WTC11 (cell line): ENCODE measurements at regions of chr3 and their contacts with region 1.

Region 1: DNA sequence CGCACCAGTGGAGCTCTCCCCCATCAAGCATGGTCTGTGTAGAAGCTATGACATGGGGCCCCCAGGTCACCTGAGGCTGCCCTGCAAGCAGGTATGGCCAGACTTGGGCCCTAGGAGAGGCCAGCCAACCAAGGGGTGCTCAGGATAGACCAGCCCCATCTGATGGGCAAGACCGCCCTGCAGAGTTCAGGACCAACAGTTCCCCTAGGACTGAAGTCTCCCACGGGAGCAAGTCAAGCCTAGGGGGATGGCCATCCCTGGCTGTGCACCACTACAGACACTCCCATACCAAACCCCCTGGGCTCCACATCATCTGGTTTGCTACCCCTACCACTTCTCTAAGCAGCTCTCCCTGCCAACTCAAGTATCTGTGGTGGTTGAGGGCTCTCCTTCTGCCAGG is 142.2 kb upstream of the MANF start:
- DNase-seq: no peak
- ATAC-seq: no peak
- H3K4me3 Mint-ChIP-seq: no peak overlapping the region
- H3K27ac Mint-ChIP-seq: no peak overlapping the region
- H3K4me1 Mint-ChIP-seq: no peaks in the 10 kb centered on the region
- H3K27me3 Mint-ChIP-seq: no peaks in the 10 kb centered on the region
- CTCF ChIP-seq: no peak

Region 2: DNA sequence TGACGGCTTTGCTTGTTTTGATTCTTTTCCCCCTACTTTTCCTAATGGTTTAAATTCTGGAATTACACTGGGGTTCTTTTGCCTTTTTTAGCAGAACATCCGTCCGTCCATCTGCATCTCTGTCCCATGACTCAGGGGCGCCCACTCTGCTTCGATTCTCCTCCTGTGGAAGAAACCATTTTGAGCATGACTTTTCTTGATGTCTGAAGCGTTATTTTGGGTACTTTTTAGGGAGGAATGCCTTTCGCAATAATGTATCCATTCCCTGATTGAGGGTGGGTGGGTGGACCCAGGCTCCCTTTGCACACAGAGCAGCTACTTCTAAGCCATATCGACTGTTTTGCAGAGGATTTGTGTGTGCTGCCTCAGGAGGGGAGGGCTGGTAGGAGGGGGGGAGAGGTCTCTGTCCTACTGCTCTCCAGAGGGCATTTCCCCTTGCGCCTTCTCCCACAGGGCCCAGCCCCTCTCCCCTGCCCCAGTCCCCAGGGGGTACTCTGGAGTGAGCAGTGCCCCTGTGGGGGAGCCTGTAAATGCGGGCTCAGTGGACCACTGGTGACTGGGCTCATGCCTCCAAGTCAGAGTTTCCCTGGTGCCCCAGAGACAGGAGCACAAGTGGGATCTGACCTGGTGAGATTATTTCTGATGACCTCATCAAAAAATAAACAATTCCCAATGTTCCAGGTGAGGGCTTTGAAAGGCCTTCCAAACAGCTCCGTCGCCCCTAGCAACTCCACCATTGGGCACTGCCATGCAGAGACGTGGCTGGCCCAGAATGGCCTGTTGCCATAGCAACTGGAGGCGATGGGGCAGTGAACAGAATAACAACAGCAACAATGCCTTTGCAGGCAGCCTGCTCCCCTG is 1708.1 kb before region 1 on chr3:
- CTCF ChIA-PET with region 1: no interaction called
- POLR2A ChIA-PET with region 1: interaction called, 10 read pairs
- DNase-seq: peak; percentile 73
- ATAC-seq: peak; percentile 9
- H3K4me3 Mint-ChIP-seq: no peak overlapping the region
- H3K27ac Mint-ChIP-seq: peak overlapping the region; percentile 41; the same call in 1 of the 2 replicates
- H3K4me1 Mint-ChIP-seq: peaks cover 17% of the 10 kb centered on the region
- H3K27me3 Mint-ChIP-seq: no peaks in the 10 kb centered on the region
- CTCF ChIP-seq: no peak